PC-3 (cell line): ENCODE measurements at regions of chr1 and their contacts with region 1.

Region 1: DNA sequence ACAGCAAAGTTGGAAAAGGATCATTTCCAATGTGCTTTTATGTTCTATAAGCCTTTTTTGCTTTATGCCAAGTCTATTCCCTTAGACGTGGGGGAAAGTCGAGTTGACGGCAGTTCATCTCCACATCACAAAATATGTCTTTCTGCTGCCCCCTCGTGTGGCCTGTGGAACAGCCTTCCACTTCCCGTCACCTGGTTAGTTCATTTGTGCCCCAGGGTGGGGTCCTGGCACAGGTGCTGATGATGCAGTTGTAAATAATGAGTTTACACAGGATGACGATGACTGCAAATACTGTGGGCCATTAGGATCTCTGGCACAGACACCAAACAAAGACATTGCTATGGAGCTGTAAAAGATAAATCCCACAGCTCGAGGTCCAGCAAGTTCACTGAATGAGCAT is 10.0 kb upstream of the OTUD3 start:
- DNase-seq: peak; percentile 98
- ATAC-seq: peak; percentile 95
- H3K4me3 ChIP-seq: no peak overlapping the region
- H3K27ac ChIP-seq: peak overlapping the region; percentile 82
- H3K4me1 ChIP-seq: peaks cover 35% of the 10 kb centered on the region
- H3K27me3 ChIP-seq: no peaks in the 10 kb centered on the region
- CTCF ChIP-seq: peak; percentile 77

Region 2: DNA sequence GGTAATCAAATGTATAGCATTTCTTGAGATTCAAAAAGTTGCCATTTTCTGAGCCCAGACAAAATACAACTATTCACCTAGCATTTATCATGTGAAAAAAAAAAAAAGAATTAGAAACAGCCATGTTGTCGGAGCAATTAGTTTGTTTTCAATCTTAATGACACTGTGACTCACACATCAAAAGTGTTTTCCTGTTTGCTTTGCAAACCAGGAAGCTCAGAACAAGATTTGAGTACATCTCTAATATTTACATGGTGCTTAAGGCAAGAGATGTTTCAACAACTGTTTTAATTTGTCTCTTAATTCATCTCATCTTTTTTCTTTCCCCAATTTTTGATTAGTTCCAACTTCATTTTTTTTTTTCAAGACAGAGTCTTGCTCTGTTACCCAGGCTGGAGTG is 324.4 kb before region 1 on chr1:
- CTCF ChIA-PET with region 1: no interaction called
- POLR2A ChIA-PET with region 1: interaction called, 22 read pairs
- intact Hi-C with region 1: no loop called
- DNase-seq: peak; percentile 21
- ATAC-seq: peak; percentile 67
- H3K4me3 ChIP-seq: no peak overlapping the region
- H3K27ac ChIP-seq: no peak overlapping the region
- H3K4me1 ChIP-seq: no peaks in the 10 kb centered on the region
- H3K27me3 ChIP-seq: no peaks in the 10 kb centered on the region
- CTCF ChIP-seq: no peak

Region 3: DNA sequence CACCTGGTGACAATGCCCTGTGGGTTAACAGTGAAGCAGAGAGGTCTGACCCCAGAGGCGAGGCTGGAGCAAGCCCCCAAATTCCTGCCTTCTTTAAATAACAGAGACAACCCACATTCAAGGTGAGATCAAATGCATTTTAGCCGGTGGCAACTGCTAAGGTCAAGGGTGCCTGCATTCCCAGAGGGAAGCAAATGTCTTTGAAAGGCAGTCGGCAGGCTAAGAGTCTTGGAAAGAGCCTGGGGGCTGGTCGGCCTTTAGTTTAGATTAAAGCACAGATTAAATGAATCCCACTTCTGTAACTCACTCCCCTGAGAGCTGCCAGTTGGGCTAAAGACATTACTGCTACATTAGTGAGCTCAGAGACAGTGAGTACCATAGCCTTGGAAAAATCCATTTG is 148.4 kb before region 1 on chr1:
- CTCF ChIA-PET with region 1: no interaction called
- POLR2A ChIA-PET with region 1: no interaction called
- intact Hi-C with region 1: no loop called
- DNase-seq: no peak
- ATAC-seq: no peak
- H3K4me3 ChIP-seq: no peak overlapping the region
- H3K27ac ChIP-seq: no peak overlapping the region
- H3K4me1 ChIP-seq: no peaks in the 10 kb centered on the region
- H3K27me3 ChIP-seq: no peaks in the 10 kb centered on the region
- CTCF ChIP-seq: no peak

Region 4: DNA sequence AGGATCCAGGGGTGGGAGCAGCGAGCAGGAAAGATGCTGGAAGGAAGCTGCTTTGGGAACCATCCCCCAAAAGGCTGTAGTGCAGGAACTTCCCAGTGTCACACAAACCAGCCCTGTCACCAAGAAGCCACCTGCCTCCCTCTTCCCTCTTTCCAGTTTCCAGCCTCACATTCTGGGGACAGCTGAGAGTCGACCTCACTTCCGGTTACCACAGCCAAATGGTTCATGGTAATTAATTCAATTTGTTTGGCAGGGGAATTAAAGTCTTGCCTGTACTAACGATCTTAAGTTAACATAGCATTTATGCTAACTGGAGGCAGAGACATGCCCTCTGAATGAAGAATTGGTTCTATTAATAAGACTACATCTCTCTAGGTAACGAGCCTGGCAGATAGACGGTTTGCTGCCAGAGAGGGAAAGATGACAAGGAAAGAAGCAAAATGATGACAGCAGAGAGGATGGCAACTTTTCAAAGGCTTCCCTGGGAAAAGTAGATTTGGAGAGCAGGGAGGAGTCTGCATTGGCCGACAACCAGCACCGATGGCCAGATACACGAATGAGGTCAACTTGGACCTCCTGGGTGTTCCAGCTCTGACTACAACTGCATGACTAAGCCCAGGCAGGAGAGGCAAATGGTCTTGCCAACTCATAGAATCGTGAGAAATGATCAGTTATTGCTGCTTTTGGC is 136.6 kb before region 1 on chr1:
- CTCF ChIA-PET with region 1: no interaction called
- POLR2A ChIA-PET with region 1: no interaction called
- intact Hi-C with region 1: loop called (anchors 1 kb)
- DNase-seq: peak; percentile 83
- ATAC-seq: peak; percentile 81
- H3K4me3 ChIP-seq: no peak overlapping the region
- H3K27ac ChIP-seq: peak overlapping the region; percentile 88
- H3K4me1 ChIP-seq: peaks cover 38% of the 10 kb centered on the region
- H3K27me3 ChIP-seq: no peaks in the 10 kb centered on the region
- CTCF ChIP-seq: no peak

Region 5: DNA sequence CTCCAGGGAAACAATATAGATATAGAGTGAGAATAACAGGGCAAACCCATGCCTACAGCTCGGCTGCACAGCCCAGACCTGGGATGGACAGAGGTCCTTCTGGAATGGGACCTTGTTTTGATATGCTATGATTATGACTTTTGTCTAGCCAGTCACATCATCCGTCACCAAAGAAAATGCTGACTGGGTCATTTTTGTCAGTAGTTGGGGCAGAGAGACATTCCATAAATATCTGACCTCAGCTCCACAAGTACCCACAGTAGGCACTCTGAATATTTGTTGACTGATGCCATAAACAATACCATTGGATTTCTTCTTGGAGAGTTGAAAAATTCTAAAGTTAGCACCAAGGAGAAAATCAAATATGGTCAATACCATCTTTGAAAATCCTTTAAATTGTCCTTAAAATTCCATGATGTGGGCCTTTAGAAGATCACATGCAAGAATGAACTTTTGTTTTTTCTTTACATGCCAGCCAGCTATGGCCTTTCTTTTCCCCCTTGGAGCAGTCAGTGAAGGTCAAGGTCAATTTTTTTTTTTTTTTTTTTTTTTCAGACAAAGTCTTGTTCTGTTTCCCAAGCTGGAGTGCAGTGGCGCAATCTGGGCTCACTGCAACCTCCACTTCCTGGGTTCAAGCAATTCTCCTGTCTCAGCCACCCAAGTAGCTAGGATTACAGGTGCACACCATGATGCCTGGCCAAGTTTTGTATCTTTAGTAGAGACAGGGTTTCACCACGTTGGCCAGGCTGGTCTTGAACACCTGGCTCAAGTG is 79.8 kb before region 1 on chr1:
- CTCF ChIA-PET with region 1: interaction called, 12 read pairs
- POLR2A ChIA-PET with region 1: no interaction called
- intact Hi-C with region 1: no loop called
- DNase-seq: no peak
- ATAC-seq: no peak
- H3K4me3 ChIP-seq: no peak overlapping the region
- H3K27ac ChIP-seq: no peak overlapping the region
- H3K4me1 ChIP-seq: peaks cover under 1% of the 10 kb centered on the region
- H3K27me3 ChIP-seq: no peaks in the 10 kb centered on the region
- CTCF ChIP-seq: no peak

Region 6: GRCh38 chr1:19844731-19845495 is 27.3 kb before region 1 on chr1:
- CTCF ChIA-PET with region 1: no interaction called
- POLR2A ChIA-PET with region 1: no interaction called
- intact Hi-C with region 1: loop called (anchors 1 kb)
- DNase-seq: no peak
- ATAC-seq: no peak
- H3K4me3 ChIP-seq: no peak overlapping the region
- H3K27ac ChIP-seq: no peak overlapping the region
- H3K4me1 ChIP-seq: peaks cover 11% of the 10 kb centered on the region; the same call in 1 of the 2 replicates
- H3K27me3 ChIP-seq: no peaks in the 10 kb centered on the region
- CTCF ChIP-seq: no peak